Heart left ventricle (tissue), 16 donors: ENCODE measurements at regions of chr10 and their contacts with region 1.

Region 1: DNA sequence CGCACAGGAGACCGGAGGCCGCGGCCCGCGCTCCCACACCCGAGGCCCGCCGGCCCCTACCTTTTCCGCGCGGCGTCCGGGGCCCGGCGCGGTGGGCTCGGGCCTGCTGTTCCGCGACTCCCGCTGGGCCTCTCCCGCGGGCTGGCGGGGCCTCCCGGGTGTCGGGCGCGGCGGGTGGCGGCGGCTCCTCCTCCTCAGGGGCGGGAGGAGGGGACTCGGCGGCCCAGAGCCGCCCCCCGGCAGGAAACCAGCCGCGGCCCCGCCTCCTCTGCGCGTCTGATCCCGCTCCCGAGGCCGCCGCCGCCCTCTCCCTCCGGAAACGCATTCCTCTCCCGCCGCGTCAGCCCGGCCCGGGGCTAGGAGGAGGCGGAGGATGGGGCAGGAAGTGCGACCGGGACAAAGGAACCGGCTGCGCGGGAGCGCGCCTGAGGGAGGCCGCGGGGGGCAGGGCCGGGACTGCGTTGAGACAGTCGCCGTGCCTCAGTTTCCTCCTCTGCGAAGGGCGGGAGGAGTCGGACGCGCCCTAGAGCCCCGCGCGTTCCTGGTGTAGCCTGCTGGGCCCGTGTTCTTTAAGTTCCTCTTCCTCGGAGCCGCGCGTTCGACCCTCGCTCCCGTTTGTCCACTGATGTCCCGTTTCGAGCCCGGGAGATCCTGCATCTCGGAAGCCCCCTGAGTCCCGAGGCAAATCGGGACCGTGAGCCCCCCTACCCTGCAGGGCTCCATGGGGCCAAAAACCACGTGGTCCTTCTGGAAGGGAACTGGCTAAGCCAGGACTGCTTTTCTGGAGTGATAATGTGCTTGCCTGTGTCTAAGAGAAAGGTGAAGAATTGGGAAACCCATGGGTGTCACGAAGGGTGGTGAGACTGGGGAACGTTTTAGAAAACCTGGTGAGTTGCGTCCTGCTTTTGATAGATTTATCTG is at the start of gene ITGB1:
- DNase-seq: peak; percentile 98 to 99 (median 99)
- ATAC-seq: peak; percentile 95 to 97 (median 96)
- H3K4me3 ChIP-seq: peak within 1 kb of the TSS; percentile 71 to 100 (median 93)
- H3K27ac ChIP-seq: peak within 1 kb of the TSS; percentile 94 to 100 (median 99)
- H3K4me1 ChIP-seq: peaks cover 5 to 83% (median 65%) of the 10 kb centered on the region in 12 donors
- H3K27me3 ChIP-seq: no peaks in the 10 kb centered on the region
- CTCF ChIP-seq: no peak
- POLR2A ChIP-seq: peak; percentile 70 to 94
- total RNA-seq, gene ITGB1: 542 to 1,594 (median 701) TPM

Region 2: GRCh38 chr10:32865170-32865569 is 93.2 kb before region 1 on chr10:
- intact Hi-C with region 1: no loop called
- DNase-seq: no peak
- ATAC-seq: no peak
- H3K4me3 ChIP-seq: no peak overlapping the region
- H3K27ac ChIP-seq: no peak overlapping the region
- H3K4me1 ChIP-seq: no peaks in the 10 kb centered on the region
- H3K27me3 ChIP-seq: no peaks in the 10 kb centered on the region
- CTCF ChIP-seq: no peak
- POLR2A ChIP-seq: no peak

Region 3: DNA sequence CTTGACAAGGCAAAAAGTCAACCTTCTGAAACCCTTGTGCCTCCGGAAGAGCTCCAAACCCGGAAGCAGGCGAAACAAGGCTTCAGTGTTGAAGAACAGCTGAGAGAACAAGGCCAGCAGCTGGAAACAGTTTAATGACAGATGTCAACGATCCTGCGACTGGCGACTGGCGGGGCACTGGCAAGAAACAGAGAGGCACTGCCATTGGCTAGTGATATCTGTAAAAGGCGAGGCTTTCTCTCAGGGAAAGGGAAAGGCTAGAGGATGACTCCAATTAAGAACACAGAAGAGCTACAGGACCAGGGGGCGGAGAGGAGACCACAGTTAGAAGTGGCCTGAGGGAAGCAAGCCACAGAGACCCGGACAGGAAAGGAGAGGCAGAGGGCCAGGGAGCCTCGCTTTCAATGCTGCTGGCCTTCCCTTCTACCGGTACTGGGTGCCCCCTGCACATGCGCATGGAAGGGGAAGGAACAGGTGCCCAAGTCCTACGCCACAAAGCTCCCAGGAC is 19.7 kb before region 1 on chr10:
- intact Hi-C with region 1: loop called in 2 of 10 experiments (anchors 2 kb)
- DNase-seq: peak in 4 of 5 donors; percentile 34 to 61 (median 42)
- ATAC-seq: peak; percentile 35 to 62 (median 58)
- H3K4me3 ChIP-seq: peak overlapping the region in 10 of 12 donors; percentile 11 to 40 (median 20)
- H3K27ac ChIP-seq: peak overlapping the region; percentile 3 to 87 (median 72)
- H3K4me1 ChIP-seq: peaks cover 7 to 87% (median 69%) of the 10 kb centered on the region in 12 donors
- H3K27me3 ChIP-seq: no peaks in the 10 kb centered on the region
- CTCF ChIP-seq: no peak
- POLR2A ChIP-seq: no peak

Region 4: DNA sequence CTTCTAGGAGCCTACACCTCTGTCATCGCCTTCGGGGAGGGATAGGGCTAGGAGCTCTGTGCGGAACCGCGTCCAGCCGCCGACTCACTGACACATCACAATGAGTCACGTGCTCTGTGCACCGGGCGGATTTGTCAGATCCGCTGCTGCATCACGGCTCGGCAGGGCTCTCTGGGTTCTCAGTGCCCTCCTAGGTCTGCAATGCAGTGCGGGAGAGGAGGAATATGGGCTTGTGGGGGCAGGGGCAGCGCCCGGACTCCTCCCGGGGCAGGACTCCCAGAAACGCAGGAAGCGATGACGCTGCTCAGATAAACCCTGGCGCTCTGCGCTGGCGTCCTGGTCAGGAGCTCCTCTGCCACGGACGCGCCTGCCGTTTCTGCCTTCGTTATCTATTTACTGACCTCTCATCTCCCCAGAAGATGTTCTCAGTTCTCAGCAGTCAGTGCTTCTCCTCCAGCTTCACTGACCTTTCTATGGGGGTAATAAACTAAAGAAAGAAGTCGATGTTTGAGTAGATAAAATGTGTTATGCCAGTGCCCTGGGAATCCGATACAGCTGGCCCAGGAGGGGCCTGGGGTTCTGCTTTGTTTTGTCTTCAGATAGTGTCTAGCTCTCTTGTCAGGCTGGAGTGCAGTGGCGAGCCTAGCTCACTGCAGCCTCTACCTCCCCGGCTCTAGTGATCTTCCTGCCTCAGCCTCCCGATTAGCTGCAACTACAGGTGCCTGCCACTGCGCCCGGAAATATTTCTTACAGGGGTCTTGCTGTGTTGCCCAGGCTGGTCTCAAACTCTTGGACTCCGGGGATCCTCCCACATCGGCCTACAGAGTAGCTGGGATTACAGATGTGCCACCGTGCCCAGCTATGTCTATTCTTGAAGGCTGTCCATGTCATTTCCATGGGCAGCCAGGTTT is 22.5 kb after region 1 on chr10:
- intact Hi-C with region 1: loop called in 4 of 10 experiments (anchors 1 to 2 kb)
- DNase-seq: peak; percentile 87 to 95 (median 93)
- ATAC-seq: peak; percentile 93 to 98 (median 96)
- H3K4me3 ChIP-seq: peak overlapping the region; percentile 15 to 64 (median 58)
- H3K27ac ChIP-seq: peak overlapping the region; percentile 87 to 96 (median 92)
- H3K4me1 ChIP-seq: peaks cover 7 to 63% (median 28%) of the 10 kb centered on the region in 12 donors
- H3K27me3 ChIP-seq: no peaks in the 10 kb centered on the region
- CTCF ChIP-seq: peak in 1 of 12 donors; percentile 2
- POLR2A ChIP-seq: peak in 1 of 2 donors; percentile 72